IMR-90 (cell line): ENCODE measurements at regions of chr5 and their contacts with region 1.

Region 1: DNA sequence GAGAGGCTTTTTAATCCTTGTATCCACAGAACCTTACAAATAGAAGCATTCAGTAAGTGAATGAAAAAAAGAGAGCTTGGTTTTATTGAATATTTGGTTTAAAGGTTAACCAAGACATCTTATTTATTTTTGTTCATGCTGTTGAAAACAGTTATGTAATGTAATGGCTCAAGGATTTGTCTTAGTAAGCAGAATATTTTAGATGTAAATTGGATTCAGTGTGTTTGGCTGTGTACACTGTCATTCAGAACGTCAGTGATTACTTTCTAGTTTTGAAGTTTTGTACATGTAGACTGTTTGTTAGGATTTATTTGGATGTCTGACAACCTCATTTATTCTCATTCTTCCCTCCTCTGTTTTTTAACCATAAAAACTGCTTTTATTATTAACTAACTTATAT is 31.3 kb downstream of the KCNN2 start:
- DNase-seq: no peak
- ATAC-seq: no peak
- H3K4me3 ChIP-seq: no peak overlapping the region
- H3K27ac ChIP-seq: no peak overlapping the region
- H3K4me1 ChIP-seq: no peaks in the 10 kb centered on the region
- H3K27me3 ChIP-seq: no peaks in the 10 kb centered on the region
- CTCF ChIP-seq: no peak
- POLR2A ChIP-seq: no peak
- RAD21 ChIP-seq: no peak

Region 2: GRCh38 chr5:114412510-114413171 is 19.5 kb after region 1 on chr5:
- CTCF ChIA-PET with region 1: no interaction called
- POLR2A ChIA-PET with region 1: interaction called, 12 read pairs
- dilution Hi-C with region 1: no loop called
- in situ Hi-C with region 1: no loop called
- intact Hi-C with region 1: no loop called
- DNase-seq: peak; percentile 97
- ATAC-seq: peak; percentile 95
- H3K4me3 ChIP-seq: no peak overlapping the region
- H3K27ac ChIP-seq: peak overlapping the region; percentile 49; the same call in 1 of the 2 replicates
- H3K4me1 ChIP-seq: peaks cover 9% of the 10 kb centered on the region; the same call in 1 of the 2 replicates
- H3K27me3 ChIP-seq: no peaks in the 10 kb centered on the region
- CTCF ChIP-seq: no peak
- POLR2A ChIP-seq: no peak
- RAD21 ChIP-seq: no peak

Region 3: GRCh38 chr5:114649878-114650277 is 256.7 kb after region 1 on chr5:
- CTCF ChIA-PET with region 1: no interaction called
- POLR2A ChIA-PET with region 1: no interaction called
- dilution Hi-C with region 1: no loop called
- in situ Hi-C with region 1: no loop called
- intact Hi-C with region 1: no loop called
- DNase-seq: no peak
- ATAC-seq: no peak
- H3K4me3 ChIP-seq: no peak overlapping the region
- H3K27ac ChIP-seq: no peak overlapping the region
- H3K4me1 ChIP-seq: no peaks in the 10 kb centered on the region
- H3K27me3 ChIP-seq: no peaks in the 10 kb centered on the region
- CTCF ChIP-seq: no peak
- POLR2A ChIP-seq: no peak
- RAD21 ChIP-seq: no peak